Endothelial cell of umbilical vein (primary cell): ENCODE measurements at regions of chr4 and their contacts with region 1.

Region 1: GRCh38 chr4:185134307-185134869 is 8.7 kb upstream of the SLC25A4 start:
- DNase-seq: peak; percentile 56
- H3K4me3 ChIP-seq: no peak overlapping the region
- H3K27ac ChIP-seq: no peak overlapping the region
- H3K4me1 ChIP-seq: peaks cover 4% of the 10 kb centered on the region
- H3K27me3 ChIP-seq: no peaks in the 10 kb centered on the region
- CTCF ChIP-seq: peak; percentile 32 to 53
- POLR2A ChIP-seq: no peak

Region 2: DNA sequence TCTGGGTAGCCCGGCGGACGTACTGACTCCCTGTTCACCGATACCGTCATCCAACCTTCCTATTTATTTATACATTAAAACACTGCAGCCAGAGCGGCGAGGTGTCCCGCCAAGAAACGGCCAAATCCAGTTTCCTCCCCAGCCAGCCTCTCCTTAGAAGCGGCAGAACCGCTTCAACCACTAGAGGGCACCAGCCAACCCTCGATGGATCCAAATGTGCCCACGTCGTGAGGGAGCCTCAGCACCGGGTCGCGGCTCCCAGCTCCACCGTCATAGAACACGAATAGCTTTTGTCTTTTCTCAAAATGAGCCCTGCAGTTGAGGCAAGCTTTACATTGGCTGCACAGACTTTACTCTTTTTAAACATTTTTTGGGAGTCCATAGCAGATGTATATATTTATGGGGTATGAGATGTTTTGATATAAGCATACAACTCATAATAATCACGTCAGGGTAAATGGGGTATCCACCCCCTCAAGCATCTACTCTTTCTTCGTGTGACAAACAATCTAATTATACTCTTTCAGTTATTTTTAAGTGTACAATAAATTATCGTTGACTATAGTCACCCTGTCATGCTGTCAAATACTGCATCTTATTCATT is 129.1 kb before region 1 on chr4:
- CTCF ChIA-PET with region 1: interaction called, 19 read pairs
- POLR2A ChIA-PET with region 1: no interaction called
- dilution Hi-C with region 1: no loop called
- intact Hi-C with region 1: loop called (anchors 1 kb)
- DNase-seq: peak; percentile 68
- H3K4me3 ChIP-seq: no peak overlapping the region
- H3K27ac ChIP-seq: no peak overlapping the region
- H3K4me1 ChIP-seq: no peaks in the 10 kb centered on the region
- H3K27me3 ChIP-seq: peaks cover 0 to 8% of the 10 kb centered on the region in 2 experiments
- CTCF ChIP-seq: peak; percentile 94 to 96
- POLR2A ChIP-seq: no peak

Region 3: DNA sequence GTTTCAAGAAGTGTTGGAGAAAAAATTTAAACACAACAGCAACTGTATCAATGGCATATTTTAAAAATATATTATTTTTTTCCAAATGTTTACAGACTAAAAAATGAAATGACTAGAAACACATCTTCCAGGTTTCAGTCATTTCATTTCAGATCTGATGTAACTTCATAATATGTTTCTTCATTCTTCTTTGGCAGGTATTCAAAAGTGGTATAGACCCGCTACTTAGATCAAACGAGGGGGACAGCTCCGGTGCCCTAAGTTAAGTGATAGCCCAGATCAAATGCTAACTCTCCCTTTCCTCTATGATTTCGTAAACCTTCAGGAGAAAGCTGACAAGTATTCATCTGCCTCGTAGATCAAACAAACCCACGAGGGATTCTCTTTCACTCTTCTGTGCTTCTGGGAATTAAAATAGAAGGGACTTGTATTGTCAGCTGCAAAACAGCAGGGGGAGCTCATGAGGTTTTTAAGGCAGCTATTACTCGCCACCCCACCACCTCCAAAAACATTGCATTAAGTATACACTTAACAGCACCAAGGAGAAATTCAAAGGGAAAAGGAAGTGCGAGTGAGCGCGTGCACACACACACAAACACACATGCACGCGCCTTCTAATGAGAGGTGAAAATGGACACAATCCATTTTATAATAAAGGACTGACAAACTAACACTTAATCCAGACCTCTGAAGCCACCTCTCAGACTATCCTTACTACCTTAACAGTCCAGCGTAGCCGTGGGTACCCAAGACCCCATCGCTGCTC is 94.7 kb before region 1 on chr4:
- CTCF ChIA-PET with region 1: interaction called, 295 read pairs
- POLR2A ChIA-PET with region 1: interaction called, 5 read pairs
- dilution Hi-C with region 1: no loop called
- intact Hi-C with region 1: loop called (anchors 1 kb)
- DNase-seq: peak; percentile 68
- H3K4me3 ChIP-seq: no peak overlapping the region
- H3K27ac ChIP-seq: no peak overlapping the region
- H3K4me1 ChIP-seq: no peaks in the 10 kb centered on the region
- H3K27me3 ChIP-seq: peaks cover 0 to 3% of the 10 kb centered on the region in 2 experiments
- CTCF ChIP-seq: peak; percentile 73 to 76
- POLR2A ChIP-seq: no peak

Region 4: GRCh38 chr4:185115827-185116232 is 18.6 kb before region 1 on chr4:
- CTCF ChIA-PET with region 1: interaction called, 15 read pairs
- POLR2A ChIA-PET with region 1: no interaction called
- dilution Hi-C with region 1: no loop called
- intact Hi-C with region 1: no loop called
- DNase-seq: peak; percentile 51
- H3K4me3 ChIP-seq: no peak overlapping the region
- H3K27ac ChIP-seq: no peak overlapping the region
- H3K4me1 ChIP-seq: peaks cover 9% of the 10 kb centered on the region
- H3K27me3 ChIP-seq: no peaks in the 10 kb centered on the region
- CTCF ChIP-seq: no peak
- POLR2A ChIP-seq: no peak

Region 5: DNA sequence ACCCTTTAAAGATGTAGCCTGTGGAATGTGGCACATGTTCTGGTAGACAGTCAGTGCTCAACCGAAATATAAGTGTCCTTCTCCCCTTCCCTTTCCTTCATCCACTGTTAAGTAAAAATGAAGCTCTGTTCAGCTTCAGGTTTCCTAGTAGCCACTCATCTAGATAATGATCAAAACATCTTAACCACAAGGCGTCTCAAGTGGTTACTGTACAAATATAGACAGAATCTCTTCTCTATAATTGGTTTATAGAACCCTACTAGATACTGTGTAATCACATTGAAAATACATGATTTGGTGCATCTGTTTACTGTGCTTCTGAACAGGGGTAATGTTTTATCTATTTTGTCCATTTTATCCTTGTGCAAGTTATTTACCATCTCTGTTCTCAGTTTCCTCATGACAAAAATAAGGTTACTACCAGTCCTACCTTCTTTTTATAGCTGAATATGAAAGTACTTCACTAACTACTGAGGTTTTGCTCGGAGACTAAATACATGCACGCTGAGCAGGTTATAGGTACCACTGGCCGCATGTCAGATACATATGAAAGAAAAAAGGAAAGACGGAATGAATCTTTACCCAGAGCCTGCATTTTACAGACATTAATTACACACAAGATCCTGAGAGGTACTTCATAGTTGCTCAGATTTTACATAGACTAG is 11.6 kb before region 1 on chr4:
- CTCF ChIA-PET with region 1: interaction called, 24 read pairs
- POLR2A ChIA-PET with region 1: no interaction called
- dilution Hi-C with region 1: no loop called
- intact Hi-C with region 1: no loop called
- DNase-seq: no peak
- H3K4me3 ChIP-seq: no peak overlapping the region
- H3K27ac ChIP-seq: no peak overlapping the region
- H3K4me1 ChIP-seq: peaks cover 6% of the 10 kb centered on the region
- H3K27me3 ChIP-seq: peaks cover 7 to 9% of the 10 kb centered on the region in 2 experiments
- CTCF ChIP-seq: no peak
- POLR2A ChIP-seq: no peak